ENCODE measurements at regions of chr15 and their contacts with region 1.

Region 1: DNA sequence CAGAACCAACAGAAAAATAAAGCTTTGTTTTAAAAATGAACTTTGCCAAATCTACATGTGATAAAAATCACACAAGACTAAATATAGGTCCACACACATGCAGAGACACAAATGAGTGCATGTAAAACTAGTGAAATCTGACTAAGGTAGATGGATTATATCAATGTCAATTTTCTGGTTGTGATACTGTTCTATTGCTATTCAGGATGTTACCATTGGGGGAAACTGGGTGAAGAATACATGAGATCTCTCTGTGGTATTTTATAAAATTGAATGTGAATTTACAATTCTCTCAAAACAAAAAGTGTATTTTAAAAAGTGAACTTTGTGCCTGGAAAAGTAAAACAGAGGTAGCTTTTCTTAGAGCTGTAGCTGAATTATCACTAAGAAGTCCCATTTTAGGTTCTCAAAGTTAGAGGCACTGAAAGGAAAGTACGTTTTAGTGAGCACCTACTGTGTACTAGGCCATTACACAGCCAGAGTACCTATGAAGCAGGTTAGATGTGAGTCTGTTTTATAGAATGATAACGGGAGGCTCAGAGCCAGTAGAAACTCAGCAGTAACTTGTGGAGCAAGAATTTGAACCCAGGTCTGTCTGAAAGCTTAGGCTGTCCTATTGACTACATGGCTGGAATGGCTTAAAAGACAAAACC is 8.2 kb downstream of the GRAMD2A start:
- DNase-seq: no peak
- H3K4me3 ChIP-seq: no peak overlapping the region
- H3K27ac ChIP-seq: no peak overlapping the region
- H3K4me1 ChIP-seq: peaks cover 4% of the 10 kb centered on the region
- H3K27me3 ChIP-seq: no peaks in the 10 kb centered on the region
- CTCF ChIP-seq: no peak
- POLR2A ChIP-seq: no peak

Region 2: DNA sequence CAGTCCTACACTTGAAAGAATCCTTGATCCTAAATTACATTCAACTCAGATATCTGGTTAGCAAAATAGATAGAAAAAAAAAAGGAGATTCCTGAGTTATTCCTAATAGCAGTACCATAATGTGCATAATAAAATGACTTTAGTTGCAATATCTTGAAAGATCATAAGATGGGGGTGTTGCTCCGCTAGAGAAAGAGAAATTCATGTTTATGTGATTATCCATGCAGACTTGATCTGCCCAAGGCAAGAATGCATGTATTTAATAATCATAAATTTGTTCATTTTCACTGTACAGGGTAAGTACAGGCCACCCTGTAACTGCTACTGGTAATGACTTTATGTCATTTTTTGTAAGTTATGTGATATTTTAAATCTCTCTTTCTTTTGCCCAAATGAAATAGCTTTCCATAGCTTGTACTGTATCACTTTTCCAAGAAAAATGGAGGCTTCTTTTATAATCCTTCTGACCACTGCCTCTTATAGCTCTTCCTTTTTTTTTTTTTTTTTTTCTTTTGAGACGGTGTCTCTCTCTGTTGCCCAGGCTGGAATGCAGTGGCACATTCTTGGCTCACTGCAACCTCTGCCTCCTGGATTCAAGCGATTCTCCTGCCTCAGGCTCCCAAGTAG is 1094.8 kb after region 1 on chr15:
- intact Hi-C with region 1: loop called (anchors 5 kb)
- DNase-seq: no peak
- H3K4me3 ChIP-seq: no peak overlapping the region
- H3K27ac ChIP-seq: no peak overlapping the region
- H3K4me1 ChIP-seq: no peaks in the 10 kb centered on the region
- H3K27me3 ChIP-seq: no peaks in the 10 kb centered on the region
- CTCF ChIP-seq: no peak
- POLR2A ChIP-seq: no peak

Measured in vagina (tissue), 2 donors.